ENCODE measurements at regions of chr5 and their contacts with region 1.

Region 1: DNA sequence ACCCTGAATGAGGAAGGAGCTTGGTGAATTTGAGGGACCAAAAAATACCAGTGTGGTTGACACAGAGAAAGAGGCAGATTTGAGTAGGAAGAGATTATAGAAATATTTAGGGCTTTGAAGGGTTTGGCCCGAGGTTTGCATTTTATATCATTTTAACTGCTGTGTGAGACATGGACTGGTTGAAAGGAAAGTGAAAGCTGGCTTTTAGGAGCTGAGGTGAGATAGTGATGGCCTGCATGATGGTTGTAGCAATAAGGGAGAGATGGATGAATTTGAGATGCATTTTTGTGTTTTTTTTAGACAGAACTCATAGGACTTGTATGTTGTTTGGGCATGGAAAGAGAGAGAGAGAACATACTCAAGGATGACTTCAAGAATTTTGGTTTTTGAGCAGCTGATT is 21.7 kb downstream of the FER start:
- DNase-seq: no peak

Region 2: DNA sequence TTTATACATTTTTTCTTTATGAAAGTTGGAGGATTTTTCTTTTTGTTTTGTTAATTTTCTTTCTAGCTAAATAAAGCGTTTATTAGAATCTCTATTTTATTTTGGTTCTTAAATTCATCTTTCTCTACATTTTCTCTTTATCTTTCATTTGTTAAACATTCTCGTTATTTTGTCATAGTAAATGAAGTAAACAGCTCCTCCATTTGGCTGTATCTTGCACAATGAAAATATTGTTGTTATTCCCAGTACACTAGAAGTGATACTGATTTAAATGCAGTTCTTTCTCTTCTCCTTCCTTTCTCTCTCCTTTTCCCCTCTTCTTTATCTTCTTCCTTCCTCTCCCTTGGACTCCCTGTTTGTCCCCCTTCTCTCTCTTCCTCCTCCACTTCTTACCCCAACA is 67.1 kb after region 1 on chr5:
- intact Hi-C with region 1: loop called in 1 of 2 experiments (anchors 10 kb)
- DNase-seq: no peak

Measured in posterior vena cava (tissue), 2 donors.